CD4-positive, alpha-beta memory T cell (primary cell): ENCODE measurements at regions of chr3 and their contacts with region 1.

Region 1: DNA sequence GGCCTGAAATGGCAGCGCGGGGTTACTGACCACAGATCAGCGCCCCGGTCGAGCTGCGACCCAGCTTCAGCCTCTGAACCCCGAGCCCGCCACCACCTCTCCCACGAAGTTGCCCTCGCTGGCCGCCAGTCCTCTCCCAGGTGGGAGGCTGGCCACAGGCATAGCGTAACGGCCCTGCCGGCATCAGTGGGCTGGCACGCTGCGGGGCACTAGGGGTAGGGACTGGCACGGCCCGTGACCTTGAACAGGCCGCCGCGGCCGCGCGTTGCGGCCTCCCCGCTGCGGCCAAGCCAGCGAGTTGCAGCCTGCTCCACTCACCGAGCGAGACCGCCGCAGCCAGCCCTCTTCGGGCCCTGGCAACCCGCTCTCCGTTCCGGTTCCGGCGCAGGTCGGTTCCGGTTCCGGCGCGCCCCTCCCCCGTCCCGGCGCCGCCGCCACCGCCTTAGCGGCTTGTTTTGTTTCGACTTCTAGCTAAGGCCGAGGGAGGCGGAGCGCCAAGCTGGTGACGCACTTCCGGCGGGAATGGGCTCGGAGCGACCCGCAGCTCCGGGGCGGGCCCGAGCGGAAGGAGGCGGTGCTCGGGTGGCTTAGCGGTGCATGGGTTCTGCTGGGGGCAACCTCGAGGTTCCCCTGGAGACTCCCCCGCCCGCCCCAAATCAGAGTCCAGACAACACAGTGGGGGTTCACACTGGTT is at the start of gene USP19:
- DNase-seq: peak; percentile 94 to 95 (median 95)
- H3K4me3 ChIP-seq: peak within 1 kb of the TSS; percentile 45 to 94
- H3K4me3 Mint-ChIP-seq: peak within 1 kb of the TSS; percentile 86 to 90 (median 89)
- H3K27ac ChIP-seq: peak within 1 kb of the TSS; percentile 92
- H3K27ac Mint-ChIP-seq: peak within 1 kb of the TSS; percentile 88 to 95 (median 92)
- H3K4me1 ChIP-seq: peaks cover 26% of the 10 kb centered on the region
- H3K4me1 Mint-ChIP-seq: peaks cover 7 to 35% (median 19%) of the 10 kb centered on the region in 4 donors
- H3K27me3 ChIP-seq: no peaks in the 10 kb centered on the region
- H3K27me3 Mint-ChIP-seq: no peaks in the 10 kb centered on the region
- total RNA-seq, gene USP19: 91.7 to 105 TPM

Region 2: DNA sequence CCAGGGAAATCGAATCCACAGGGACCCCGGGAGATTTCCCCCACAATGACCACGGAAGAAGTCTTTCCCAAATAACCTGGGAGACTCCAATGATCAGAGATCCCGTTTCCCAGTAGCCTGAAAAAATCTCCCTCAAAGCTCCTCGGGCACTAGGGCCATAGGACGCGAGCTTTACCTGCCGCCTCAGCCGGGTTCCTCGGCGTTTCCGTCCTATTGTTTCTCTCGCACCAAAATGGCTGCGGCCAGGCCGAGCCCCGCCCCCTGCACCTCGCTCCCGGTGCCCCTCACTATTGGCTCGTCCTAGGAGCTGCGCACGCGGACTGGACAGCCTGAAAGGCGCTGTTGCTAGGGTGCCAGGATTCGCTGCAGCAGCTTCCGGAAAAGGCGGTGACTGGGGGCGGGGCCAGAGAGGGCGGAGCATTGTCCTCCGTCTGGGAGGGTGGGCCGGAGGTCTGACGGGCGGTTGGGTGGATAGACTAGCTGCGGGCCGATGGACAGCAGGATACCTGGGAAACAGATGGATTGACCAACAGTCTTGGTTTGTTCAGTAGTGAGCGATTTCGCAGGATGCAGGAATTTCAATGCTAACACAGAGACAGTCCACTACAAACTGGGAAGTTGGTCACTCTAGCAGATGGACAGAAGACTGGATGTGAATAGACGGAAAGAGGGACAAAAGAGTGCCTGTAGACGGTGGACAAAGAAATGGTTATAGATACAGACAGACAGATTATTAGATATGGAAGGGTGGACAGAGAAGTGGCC is 403.4 kb before region 1 on chr3 and contains the start of gene IP6K2:
- CTCF ChIA-PET with region 1: no interaction called
- POLR2A ChIA-PET with region 1: interaction called, 10 read pairs
- intact Hi-C with region 1: no loop called
- DNase-seq: peak; percentile 95 to 99 (median 97)
- H3K4me3 ChIP-seq: peak within 1 kb of the TSS; percentile 90 to 98
- H3K4me3 Mint-ChIP-seq: peak within 1 kb of the TSS; percentile 98 to 100 (median 99)
- H3K27ac ChIP-seq: peak within 1 kb of the TSS; percentile 91
- H3K27ac Mint-ChIP-seq: peak within 1 kb of the TSS; percentile 88 to 99 (median 99)
- H3K4me1 ChIP-seq: peaks cover 44% of the 10 kb centered on the region
- H3K4me1 Mint-ChIP-seq: peaks cover 28 to 51% (median 37%) of the 10 kb centered on the region in 4 donors
- H3K27me3 ChIP-seq: no peaks in the 10 kb centered on the region
- H3K27me3 Mint-ChIP-seq: no peaks in the 10 kb centered on the region
- total RNA-seq, gene IP6K2: 84.5 to 91.8 TPM

Region 3: GRCh38 chr3:49021813-49022687 is 98.5 kb before region 1 on chr3 and contains the start of gene NDUFAF3:
- CTCF ChIA-PET with region 1: interaction called, 3 read pairs
- POLR2A ChIA-PET with region 1: interaction called, 30 read pairs
- intact Hi-C with region 1: no loop called
- DNase-seq: peak; percentile 89 to 91 (median 90)
- H3K4me3 ChIP-seq: peak within 1 kb of the TSS; percentile 65 to 98
- H3K4me3 Mint-ChIP-seq: peak within 1 kb of the TSS; percentile 94 to 98 (median 96)
- H3K27ac ChIP-seq: peak within 1 kb of the TSS; percentile 97
- H3K27ac Mint-ChIP-seq: peak within 1 kb of the TSS; percentile 93 to 99 (median 98)
- H3K4me1 ChIP-seq: peaks cover 43% of the 10 kb centered on the region
- H3K4me1 Mint-ChIP-seq: peaks cover 16 to 74% (median 41%) of the 10 kb centered on the region in 4 donors
- H3K27me3 ChIP-seq: no peaks in the 10 kb centered on the region
- H3K27me3 Mint-ChIP-seq: no peaks in the 10 kb centered on the region
- total RNA-seq, gene NDUFAF3: 77.9 to 85.7 TPM

Region 4: GRCh38 chr3:49104483-49105291 is 15.9 kb before region 1 on chr3 and contains the start of gene QARS1:
- CTCF ChIA-PET with region 1: interaction called, 3 read pairs
- POLR2A ChIA-PET with region 1: interaction called, 66 read pairs
- intact Hi-C with region 1: loop called (anchors 1 kb)
- DNase-seq: peak; percentile 86 to 93 (median 88)
- H3K4me3 ChIP-seq: peak within 1 kb of the TSS; percentile 64 to 94
- H3K4me3 Mint-ChIP-seq: peak within 1 kb of the TSS; percentile 96 to 99 (median 98)
- H3K27ac ChIP-seq: peak within 1 kb of the TSS; percentile 92
- H3K27ac Mint-ChIP-seq: peak within 1 kb of the TSS; percentile 94 to 99 (median 98)
- H3K4me1 ChIP-seq: peaks cover 21% of the 10 kb centered on the region
- H3K4me1 Mint-ChIP-seq: peaks cover 12 to 38% (median 26%) of the 10 kb centered on the region in 4 donors
- H3K27me3 ChIP-seq: no peaks in the 10 kb centered on the region
- H3K27me3 Mint-ChIP-seq: no peaks in the 10 kb centered on the region
- total RNA-seq, gene QARS1: 199 TPM

Region 5: DNA sequence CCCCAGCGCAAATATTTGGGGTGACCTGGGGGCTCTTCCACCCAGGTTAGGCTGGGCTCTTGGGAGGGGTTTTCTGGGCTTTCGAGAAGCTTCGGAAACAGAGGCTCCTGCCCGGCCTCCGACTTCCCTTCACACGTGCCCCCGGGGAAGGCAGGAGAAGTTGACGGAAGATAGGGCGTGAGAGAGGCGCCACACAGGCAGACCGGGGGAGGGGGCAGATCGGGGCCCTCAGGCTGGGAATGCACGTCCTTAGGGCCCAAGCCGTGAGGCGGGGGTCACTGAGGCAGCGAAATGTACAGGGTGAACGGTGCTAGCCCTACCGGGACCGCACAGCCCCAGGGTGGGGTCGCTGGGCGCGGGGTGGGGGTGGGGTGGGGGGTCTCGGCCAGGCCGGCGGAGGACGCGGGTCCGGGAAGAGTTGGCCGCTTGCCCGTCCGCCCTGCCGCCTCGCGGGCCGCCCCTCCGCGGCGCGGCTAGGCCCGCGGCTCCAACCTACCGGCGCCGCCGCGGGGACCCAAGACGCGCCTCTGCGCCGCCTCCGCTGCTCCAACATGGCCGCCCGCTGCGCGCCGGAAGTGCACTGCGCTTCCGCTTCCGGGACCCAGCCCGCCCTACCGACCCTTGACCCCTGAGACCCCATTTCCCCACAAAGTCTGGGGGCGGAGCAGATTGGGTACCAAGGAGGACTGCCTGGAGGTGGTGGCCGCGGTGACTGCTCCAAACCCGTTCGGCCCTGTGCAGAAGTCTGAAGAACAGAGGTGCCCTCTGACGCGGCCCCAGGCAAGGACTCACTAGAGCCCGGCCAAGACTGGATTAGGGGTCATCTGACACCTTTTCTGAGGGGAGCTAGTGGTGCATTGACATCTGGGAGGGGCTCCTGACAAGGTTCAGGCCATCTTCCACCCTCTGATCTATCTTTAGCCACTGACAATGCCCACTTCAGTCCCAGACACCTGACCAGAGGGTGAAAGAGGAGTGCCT is 45.5 kb after region 1 on chr3 and contains the start of gene CCDC71:
- CTCF ChIA-PET with region 1: interaction called, 4 read pairs
- POLR2A ChIA-PET with region 1: interaction called, 10 read pairs
- intact Hi-C with region 1: loop called (anchors 2 kb)
- DNase-seq: peak; percentile 70 to 77 (median 72)
- H3K4me3 ChIP-seq: peak within 1 kb of the TSS; percentile 49 to 93
- H3K4me3 Mint-ChIP-seq: peak within 1 kb of the TSS; percentile 90 to 96 (median 91)
- H3K27ac ChIP-seq: peak within 1 kb of the TSS; percentile 57
- H3K27ac Mint-ChIP-seq: peak within 1 kb of the TSS; percentile 92 to 96 (median 94)
- H3K4me1 ChIP-seq: peaks cover 31% of the 10 kb centered on the region
- H3K4me1 Mint-ChIP-seq: peaks cover 19 to 52% (median 30%) of the 10 kb centered on the region in 4 donors
- H3K27me3 ChIP-seq: no peaks in the 10 kb centered on the region
- H3K27me3 Mint-ChIP-seq: no peaks in the 10 kb centered on the region
- total RNA-seq, gene CCDC71: 31.6 to 33.5 TPM

Region 6: GRCh38 chr3:49461443-49462171 is 341.0 kb after region 1 on chr3:
- CTCF ChIA-PET with region 1: no interaction called
- POLR2A ChIA-PET with region 1: no interaction called
- intact Hi-C with region 1: no loop called
- DNase-seq: no peak
- H3K4me3 ChIP-seq: no peak overlapping the region
- H3K4me3 Mint-ChIP-seq: no peak overlapping the region
- H3K27ac ChIP-seq: no peak overlapping the region
- H3K27ac Mint-ChIP-seq: peak overlapping the region in 2 of 7 donors; percentile 15 to 69
- H3K4me1 ChIP-seq: no peaks in the 10 kb centered on the region
- H3K4me1 Mint-ChIP-seq: no peaks in the 10 kb centered on the region
- H3K27me3 ChIP-seq: no peaks in the 10 kb centered on the region
- H3K27me3 Mint-ChIP-seq: peaks cover 0 to 3% of the 10 kb centered on the region in 2 donors